Naive thymus-derived CD4-positive, alpha-beta T cell (primary cell): ENCODE measurements at regions of chr7 and their contacts with region 1.

Region 1: GRCh38 chr7:67377939-67378862 is 381.6 kb downstream of the TYW1 start:
- DNase-seq: peak; percentile 22 to 60 (median 42)
- ATAC-seq: peak; percentile 70
- H3K4me3 ChIP-seq: no peak overlapping the region
- H3K4me3 Mint-ChIP-seq: no peak overlapping the region
- H3K27ac ChIP-seq: no peak overlapping the region
- H3K27ac Mint-ChIP-seq: no peak overlapping the region
- H3K4me1 ChIP-seq: no peaks in the 10 kb centered on the region
- H3K4me1 Mint-ChIP-seq: no peaks in the 10 kb centered on the region
- H3K27me3 ChIP-seq: no peaks in the 10 kb centered on the region
- H3K27me3 Mint-ChIP-seq: peaks cover 0 to 17% (median 8%) of the 10 kb centered on the region in 5 donors

Region 2: GRCh38 chr7:67343572-67343971 is 34.6 kb before region 1 on chr7:
- CTCF ChIA-PET with region 1: no interaction called
- POLR2A ChIA-PET with region 1: no interaction called
- intact Hi-C with region 1: no loop called
- DNase-seq: no peak
- ATAC-seq: no peak
- H3K4me3 ChIP-seq: no peak overlapping the region
- H3K4me3 Mint-ChIP-seq: no peak overlapping the region
- H3K27ac ChIP-seq: no peak overlapping the region
- H3K27ac Mint-ChIP-seq: no peak overlapping the region
- H3K4me1 ChIP-seq: no peaks in the 10 kb centered on the region
- H3K4me1 Mint-ChIP-seq: peaks cover 0 to 5% (median 0%) of the 10 kb centered on the region in 7 donors
- H3K27me3 ChIP-seq: no peaks in the 10 kb centered on the region
- H3K27me3 Mint-ChIP-seq: no peaks in the 10 kb centered on the region

Region 3: GRCh38 chr7:67391168-67391567 is 13.0 kb after region 1 on chr7:
- CTCF ChIA-PET with region 1: interaction called, 10 read pairs
- POLR2A ChIA-PET with region 1: no interaction called
- intact Hi-C with region 1: no loop called
- DNase-seq: no peak
- ATAC-seq: no peak
- H3K4me3 ChIP-seq: no peak overlapping the region
- H3K4me3 Mint-ChIP-seq: no peak overlapping the region
- H3K27ac ChIP-seq: no peak overlapping the region
- H3K27ac Mint-ChIP-seq: no peak overlapping the region
- H3K4me1 ChIP-seq: no peaks in the 10 kb centered on the region
- H3K4me1 Mint-ChIP-seq: no peaks in the 10 kb centered on the region
- H3K27me3 ChIP-seq: no peaks in the 10 kb centered on the region
- H3K27me3 Mint-ChIP-seq: peaks cover 0 to 11% (median 8%) of the 10 kb centered on the region in 5 donors

Region 4: DNA sequence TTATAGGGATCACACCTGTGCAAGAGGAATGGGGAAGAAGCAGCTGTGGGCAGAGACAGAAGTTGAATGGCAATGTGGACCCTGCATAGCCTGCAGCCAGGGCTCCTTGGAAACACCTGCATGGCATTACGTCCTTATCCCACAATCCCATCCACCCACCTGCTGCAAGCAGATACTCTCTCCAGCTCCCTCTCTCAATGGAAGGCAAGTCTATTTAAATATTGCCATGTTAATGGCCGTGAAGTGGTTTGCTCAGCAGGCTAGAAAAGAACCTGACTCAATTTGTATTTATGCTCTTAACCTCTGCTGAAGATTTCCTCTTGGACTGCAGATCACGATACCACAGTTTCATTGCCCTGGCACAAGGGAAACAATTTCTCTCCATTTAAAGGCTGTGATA is 35.5 kb after region 1 on chr7:
- CTCF ChIA-PET with region 1: no interaction called
- POLR2A ChIA-PET with region 1: no interaction called
- intact Hi-C with region 1: no loop called
- DNase-seq: no peak
- ATAC-seq: no peak
- H3K4me3 ChIP-seq: no peak overlapping the region
- H3K4me3 Mint-ChIP-seq: no peak overlapping the region
- H3K27ac ChIP-seq: no peak overlapping the region
- H3K27ac Mint-ChIP-seq: no peak overlapping the region
- H3K4me1 ChIP-seq: no peaks in the 10 kb centered on the region
- H3K4me1 Mint-ChIP-seq: no peaks in the 10 kb centered on the region
- H3K27me3 ChIP-seq: no peaks in the 10 kb centered on the region
- H3K27me3 Mint-ChIP-seq: peaks cover 0 to 12% (median 10%) of the 10 kb centered on the region in 5 donors